AG04449 (cell line): ENCODE measurements at regions of chr14 and their contacts with region 1.

Region 1: DNA sequence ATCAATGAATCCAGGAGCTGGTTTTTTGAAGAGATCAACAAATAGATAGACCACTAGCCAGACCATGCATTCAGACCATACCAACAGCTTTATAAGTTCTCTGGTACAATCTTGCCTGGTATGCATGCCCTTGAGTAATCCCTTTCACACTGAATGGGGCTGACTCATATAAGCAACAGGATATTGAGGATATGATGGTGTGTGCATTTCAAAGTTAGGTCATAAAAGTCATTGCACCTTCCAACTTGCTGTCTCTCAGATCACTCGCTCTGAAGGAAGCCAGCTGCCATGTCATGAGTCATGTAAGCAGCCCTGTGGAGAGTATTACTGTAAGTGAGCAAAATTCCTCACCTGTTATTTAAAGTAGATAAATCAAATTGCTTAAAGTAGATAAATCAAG is 45.0 kb upstream of the OR6J1 start:
- DNase-seq: peak; percentile 92
- H3K4me3 ChIP-seq: no peak overlapping the region
- CTCF ChIP-seq: no peak

Region 2: GRCh38 chr14:22658946-22659345 is 30.2 kb before region 1 on chr14:
- CTCF ChIA-PET with region 1: interaction called, 11 read pairs
- POLR2A ChIA-PET with region 1: no interaction called
- DNase-seq: no peak
- H3K4me3 ChIP-seq: no peak overlapping the region
- CTCF ChIP-seq: no peak

Region 3: DNA sequence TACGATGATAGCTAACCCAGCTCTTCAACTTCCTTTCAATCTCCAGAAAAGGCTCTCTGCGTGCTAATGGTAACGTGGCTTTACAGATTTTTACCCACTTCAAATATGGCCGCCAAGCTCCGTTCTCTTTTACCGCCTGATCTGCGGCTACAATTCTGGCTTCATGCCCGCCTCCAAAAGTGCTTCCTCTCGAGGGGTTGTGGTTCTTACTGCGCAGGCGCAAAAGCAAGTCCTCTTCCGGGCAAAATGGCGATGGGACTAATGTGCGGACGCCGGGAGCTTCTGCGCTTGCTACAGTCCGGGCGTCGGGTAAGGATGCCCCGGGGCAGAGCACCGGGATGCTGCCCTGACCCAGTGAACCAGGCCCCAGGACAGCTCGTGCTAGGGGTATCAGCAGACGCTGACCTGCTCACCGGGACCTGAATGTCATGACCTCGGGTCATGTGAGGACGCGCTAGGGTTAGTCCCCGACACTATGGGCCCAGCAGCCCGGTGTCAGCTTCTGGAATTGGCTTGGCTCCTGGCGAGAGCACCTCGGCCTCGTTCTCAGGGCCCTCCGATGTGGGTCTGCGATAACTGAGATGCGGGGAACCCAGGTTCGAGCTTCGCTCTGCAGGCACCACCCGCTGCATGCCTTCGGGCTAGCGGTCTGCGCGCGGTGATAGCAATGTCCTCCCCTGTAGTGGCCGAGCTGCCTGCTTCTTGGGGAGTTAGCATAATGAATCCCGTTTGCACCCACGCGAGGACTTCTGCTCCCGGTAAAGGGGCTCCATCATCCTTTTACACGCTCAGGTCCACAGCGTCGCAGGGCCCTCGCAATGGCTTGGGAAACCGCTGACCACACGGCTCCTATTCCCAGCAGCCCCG is 77.5 kb after region 1 on chr14 and contains the start of gene OXA1L:
- CTCF ChIA-PET with region 1: no interaction called
- POLR2A ChIA-PET with region 1: no interaction called
- DNase-seq: peak; percentile 86
- H3K4me3 ChIP-seq: peak within 1 kb of the TSS; percentile 99
- CTCF ChIP-seq: no peak